Activated T-helper 2 cell treated with anti-CD3 and anti-CD28 coated beads, Interferon-gamma antibody, Interleukin-2, Interleukin-4, amounts not matched to agents 10 μg/mL and 5 μg/mL and 100 μg/mL, durations not matched to agents 14 hours and 24 hours and 36 hours (primary cell): ENCODE measurements at regions of chr1 and their contacts with region 1.

Region 1: GRCh38 chr1:113811888-113812660 is at the start of gene RSBN1:
- DNase-seq: peak; percentile 99
- H3K4me3 Mint-ChIP-seq: peak within 1 kb of the TSS; percentile 97
- H3K27ac Mint-ChIP-seq: peak within 1 kb of the TSS; percentile 95
- H3K4me1 Mint-ChIP-seq: peaks cover 27% of the 10 kb centered on the region
- H3K27me3 Mint-ChIP-seq: no peaks in the 10 kb centered on the region
- total RNA-seq, gene RSBN1: 21.5 and 23.4 TPM in 2 replicates

Region 2: DNA sequence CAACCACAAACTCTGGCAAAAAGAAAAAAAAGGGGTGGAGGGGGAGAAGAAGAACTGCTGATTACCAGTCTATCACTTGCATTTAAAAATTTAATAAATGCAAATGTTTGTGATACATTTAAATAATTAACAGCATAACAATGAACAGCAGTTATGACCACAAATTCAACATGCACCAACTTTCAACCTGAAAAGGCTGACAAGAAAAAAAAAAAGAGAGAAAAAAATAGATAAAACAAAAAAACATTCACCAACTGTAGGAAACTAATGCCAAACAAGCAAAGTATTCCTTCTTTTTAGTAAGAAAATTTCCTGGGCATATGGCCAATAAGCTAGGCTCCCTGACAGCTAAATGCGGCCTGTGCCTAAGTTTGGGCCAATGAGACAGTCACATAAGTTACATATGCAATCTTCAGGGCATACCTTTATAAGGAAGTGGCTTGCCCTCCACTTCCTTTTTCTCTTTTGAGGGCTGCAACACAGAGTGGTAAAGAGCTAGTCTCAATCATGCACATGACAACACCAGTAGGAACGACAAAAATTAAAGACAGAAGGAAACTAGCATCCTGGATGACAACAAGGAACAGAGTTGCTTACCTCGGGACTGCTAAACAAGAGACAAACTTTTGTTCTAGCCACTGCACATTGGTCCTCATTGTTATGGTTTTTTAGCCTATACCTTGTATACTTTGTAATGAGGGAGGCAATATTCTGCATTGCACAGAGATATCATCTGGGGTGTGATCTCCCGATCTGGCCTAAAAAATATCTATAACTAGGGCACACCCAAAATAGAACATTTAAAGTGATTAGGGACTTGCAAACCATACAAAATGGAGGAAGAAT is 28.6 kb before region 1 on chr1:
- intact Hi-C with region 1: loop called (anchors 1 kb)
- DNase-seq: peak; percentile 45
- H3K4me3 Mint-ChIP-seq: peak overlapping the region; percentile 68
- H3K27ac Mint-ChIP-seq: peak overlapping the region; percentile 94
- H3K4me1 Mint-ChIP-seq: peaks cover 34% of the 10 kb centered on the region
- H3K27me3 Mint-ChIP-seq: no peaks in the 10 kb centered on the region

Region 3: DNA sequence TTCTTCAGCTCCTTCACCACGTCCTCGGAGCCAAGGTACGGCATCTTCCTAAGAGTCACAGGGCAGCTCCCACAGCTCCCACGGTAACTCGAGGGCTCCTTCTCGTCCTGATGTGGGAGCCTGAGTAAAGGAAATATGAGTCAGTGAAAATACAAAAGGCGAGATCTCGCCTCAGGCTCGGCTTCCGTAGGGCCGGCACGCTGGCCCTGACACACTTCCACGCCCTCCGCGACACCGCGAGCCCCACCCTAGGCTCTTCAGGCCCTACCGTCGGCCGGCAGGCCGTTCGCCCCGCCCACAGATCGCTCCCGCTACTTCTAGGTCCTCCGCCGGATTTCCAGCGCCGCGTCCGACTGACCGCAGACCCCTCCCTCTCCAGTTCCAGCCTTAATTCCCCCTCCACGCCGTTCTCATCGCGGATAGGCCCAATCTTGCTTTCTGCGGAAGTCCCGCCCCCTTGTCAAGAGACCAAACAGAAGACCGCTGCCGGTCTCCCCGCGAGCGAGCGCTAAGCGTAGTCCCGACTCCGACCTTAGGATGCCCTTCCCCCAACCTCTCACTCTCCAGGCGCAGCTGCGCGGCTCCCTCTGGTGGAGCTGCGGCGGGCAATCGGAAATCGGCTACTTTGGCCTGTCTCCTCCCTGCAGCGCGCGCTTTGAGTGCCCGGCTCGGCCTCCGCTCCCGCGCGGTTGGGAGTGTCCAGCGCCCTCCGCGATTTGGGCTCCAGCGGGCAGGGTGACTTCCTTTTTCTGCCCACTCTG is 92.8 kb after region 1 on chr1 and contains the starts of genes AP4B1 and DCLRE1B:
- intact Hi-C with region 1: loop called (anchors 1 kb)
- DNase-seq: peak; percentile 99
- H3K4me3 Mint-ChIP-seq: peak within 1 kb of the TSS; percentile 99
- H3K27ac Mint-ChIP-seq: peak within 1 kb of the TSS; percentile 97
- H3K4me1 Mint-ChIP-seq: peaks cover 59% of the 10 kb centered on the region
- H3K27me3 Mint-ChIP-seq: no peaks in the 10 kb centered on the region
- total RNA-seq, gene AP4B1: 42.0 and 45.9 TPM in 2 replicates
- total RNA-seq, gene DCLRE1B: 18.8 and 20.8 TPM in 2 replicates